ENCODE measurements at regions of chr12 and their contacts with region 1.

Region 1: DNA sequence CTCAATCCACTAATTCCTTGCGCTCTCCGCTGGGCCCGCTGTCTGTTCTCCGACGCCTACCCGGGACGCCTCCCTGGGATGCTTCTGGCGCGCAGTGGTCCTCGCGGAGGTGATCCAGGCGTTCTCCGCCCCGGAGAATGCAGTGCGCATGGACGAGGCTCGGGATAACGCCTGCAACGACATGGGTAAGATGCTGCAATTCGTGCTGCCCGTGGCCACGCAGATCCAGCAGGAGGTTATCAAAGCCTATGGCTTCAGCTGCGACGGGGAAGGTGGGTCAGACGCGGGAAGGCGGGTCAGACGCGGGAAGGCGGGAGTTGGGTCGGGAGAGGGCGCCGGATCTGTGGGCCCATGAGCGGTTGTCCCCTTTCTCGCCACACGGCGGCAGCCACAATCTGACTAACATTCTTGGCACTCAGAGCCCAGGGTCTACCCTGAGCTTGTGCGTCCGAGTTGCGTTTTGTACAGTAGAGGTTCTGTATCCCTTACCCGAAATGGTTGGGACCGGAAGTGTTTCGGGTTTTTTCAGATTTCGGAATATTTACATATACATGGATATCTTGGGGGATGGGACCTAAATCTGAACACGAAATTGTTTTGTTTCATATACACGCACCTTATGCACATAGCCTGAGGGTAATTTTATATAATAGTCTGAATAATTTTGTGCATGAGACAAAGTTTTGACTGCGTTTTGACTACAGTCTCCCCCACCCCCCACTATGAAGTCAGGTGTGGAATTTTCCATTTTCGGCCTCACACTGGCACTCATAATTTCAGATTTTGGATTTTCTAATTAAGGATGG is 762 bp downstream of the C12orf57 start:
- DNase-seq: peak; percentile 79
- CTCF ChIP-seq: peak; percentile 94

Region 2: DNA sequence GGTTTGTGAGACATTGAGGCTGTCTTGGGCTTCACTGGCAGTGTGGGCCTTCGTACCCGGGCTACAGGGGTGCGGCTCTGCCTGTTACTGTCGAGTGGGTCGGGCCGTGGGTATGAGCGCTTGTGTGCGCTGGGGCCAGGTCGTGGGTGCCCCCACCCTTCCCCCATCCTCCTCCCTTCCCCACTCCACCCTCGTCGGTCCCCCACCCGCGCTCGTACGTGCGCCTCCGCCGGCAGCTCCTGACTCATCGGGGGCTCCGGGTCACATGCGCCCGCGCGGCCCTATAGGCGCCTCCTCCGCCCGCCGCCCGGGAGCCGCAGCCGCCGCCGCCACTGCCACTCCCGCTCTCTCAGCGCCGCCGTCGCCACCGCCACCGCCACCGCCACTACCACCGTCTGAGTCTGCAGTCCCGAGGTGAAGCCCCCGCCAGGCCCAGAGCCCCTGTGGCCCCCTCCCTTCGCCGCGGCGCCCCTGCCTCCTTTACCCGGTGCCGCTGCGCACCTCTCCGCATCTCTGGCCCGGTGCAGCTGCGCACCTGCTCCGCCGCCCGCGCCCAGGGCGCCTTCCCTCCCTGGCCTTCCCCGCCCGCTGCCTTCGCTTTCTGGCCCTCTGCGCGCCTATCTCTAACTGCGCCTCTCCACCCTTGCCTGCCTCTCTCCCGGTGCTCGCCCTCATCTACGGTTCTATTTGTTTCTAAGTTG is 30.2 kb before region 1 on chr12 and contains the start of gene ENO2:
- CTCF ChIA-PET with region 1: interaction called, 14 read pairs
- POLR2A ChIA-PET with region 1: interaction called, 3 read pairs
- DNase-seq: peak; percentile 89
- CTCF ChIP-seq: no peak

Measured in GM10248 (cell line).